Activated B cell treated with CpG ODN at 0.5 μM for 24 hours (primary cell): ENCODE measurements at regions of chr2 and their contacts with region 1.

Region 1: DNA sequence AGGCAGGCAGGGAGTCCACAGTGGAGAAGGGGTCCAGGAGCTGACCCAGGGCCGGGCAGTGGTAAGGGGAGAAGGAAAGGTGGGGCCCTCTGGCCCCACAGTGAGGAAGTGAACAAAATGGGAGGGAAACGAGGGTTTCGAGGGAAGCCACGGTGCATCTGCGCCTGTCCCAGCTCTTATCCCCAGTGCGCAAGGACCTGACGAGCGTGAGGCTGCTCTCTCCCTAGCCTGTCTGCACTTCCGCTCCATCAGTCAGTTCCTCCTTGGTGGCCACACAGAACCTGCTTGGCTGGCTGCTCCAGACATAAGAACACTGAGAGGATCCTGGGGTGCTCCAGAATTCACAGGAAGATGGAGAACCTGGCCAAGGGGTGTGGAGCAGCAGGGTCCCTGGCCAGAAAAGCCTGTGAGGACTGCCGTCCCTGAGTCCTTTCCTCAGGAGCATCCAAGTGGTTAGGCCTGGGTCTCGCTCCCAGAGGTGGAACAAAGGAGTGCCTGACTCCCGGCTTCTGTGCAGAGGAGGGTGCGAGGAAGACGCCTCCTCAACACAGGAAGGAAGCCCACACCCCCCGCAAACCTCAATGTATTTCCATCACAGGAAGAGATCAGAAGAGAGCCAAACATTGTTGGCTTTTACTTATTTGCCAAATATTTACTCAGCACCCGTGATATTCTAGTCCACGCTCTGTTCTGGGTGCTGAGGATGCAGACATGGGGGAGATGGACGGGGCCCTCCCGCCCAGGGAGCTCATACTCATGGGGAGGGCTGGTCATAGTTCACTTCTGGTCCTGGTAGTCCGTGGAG is 43.7 kb upstream of the SEMA4C start:
- DNase-seq: no peak
- ATAC-seq: peak; percentile 71
- H3K4me3 Mint-ChIP-seq: peak overlapping the region; percentile 54
- H3K27ac Mint-ChIP-seq: no peak overlapping the region
- H3K4me1 Mint-ChIP-seq: peaks cover 23% of the 10 kb centered on the region
- H3K27me3 Mint-ChIP-seq: no peaks in the 10 kb centered on the region
- CTCF ChIP-seq: no peak

Region 2: DNA sequence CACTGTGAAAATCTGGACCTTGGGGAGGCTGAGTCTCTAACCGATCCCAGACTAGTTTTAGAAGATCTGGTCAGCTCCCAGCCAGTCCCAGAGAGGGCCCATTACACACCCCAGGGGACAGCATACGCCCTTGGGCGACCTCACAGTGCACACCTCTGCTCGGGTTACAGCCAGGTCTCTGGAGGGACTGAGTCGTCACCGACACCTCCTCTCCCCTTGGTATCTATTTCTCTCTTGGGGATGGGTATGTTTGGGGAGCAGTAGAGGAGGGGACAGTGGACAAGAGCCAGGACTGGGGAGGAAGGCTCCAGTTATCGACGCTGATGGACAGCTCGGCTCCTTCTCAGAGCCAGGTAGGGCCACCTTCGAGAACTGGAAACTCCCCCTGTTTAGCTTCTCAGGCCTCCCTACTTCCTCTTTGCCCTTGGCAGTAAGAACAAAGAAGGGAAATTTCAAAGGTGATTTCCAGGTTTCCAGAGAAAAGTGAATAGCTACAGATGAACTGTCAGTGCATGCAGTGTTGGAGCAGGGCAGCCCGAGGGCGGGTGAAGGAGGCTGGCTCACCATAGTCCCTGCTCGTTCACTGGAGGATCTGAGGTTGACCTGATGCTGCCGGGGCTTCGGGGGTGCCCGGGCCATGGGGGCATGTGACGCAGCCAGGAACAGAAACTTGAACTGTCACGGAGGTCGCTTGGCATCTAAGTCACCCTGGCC is 39.3 kb before region 1 on chr2:
- CTCF ChIA-PET with region 1: no interaction called
- POLR2A ChIA-PET with region 1: no interaction called
- intact Hi-C with region 1: loop called (anchors 2 kb)
- DNase-seq: peak; percentile 60
- ATAC-seq: peak; percentile 79
- H3K4me3 Mint-ChIP-seq: peak overlapping the region; percentile 72
- H3K27ac Mint-ChIP-seq: peak overlapping the region; percentile 57
- H3K4me1 Mint-ChIP-seq: peaks cover 26% of the 10 kb centered on the region
- H3K27me3 Mint-ChIP-seq: peaks cover 7% of the 10 kb centered on the region
- CTCF ChIP-seq: no peak